Activated T-helper 1 cell treated with anti-CD3 and anti-CD28 coated beads, Interleukin-12 subunit alpha, Interleukin-12 subunit beta, Interleukin-2, Interleukin-4 antibody, amounts not matched to agents 30 ng/mL and 10 ng/mL and 1 ng/mL, durations not matched to agents 14 hours and 24 hours and 36 hours (primary cell): ENCODE measurements at regions of chr22 and their contacts with region 1.

Region 1: GRCh38 chr22:30444632-30445437 is 19.3 kb downstream of the MTFP1 start:
- DNase-seq: peak; percentile 46
- H3K4me3 Mint-ChIP-seq: no peak overlapping the region
- H3K27ac Mint-ChIP-seq: no peak overlapping the region
- H3K4me1 Mint-ChIP-seq: peaks cover 29% of the 10 kb centered on the region
- H3K27me3 Mint-ChIP-seq: peaks cover 27% of the 10 kb centered on the region

Region 2: GRCh38 chr22:30485362-30485988 is 40.6 kb after region 1 on chr22:
- intact Hi-C with region 1: loop called (anchors 1 kb)
- DNase-seq: peak; percentile 70
- H3K4me3 Mint-ChIP-seq: no peak overlapping the region
- H3K27ac Mint-ChIP-seq: no peak overlapping the region
- H3K4me1 Mint-ChIP-seq: no peaks in the 10 kb centered on the region
- H3K27me3 Mint-ChIP-seq: peaks cover 4% of the 10 kb centered on the region

Region 3: GRCh38 chr22:30602049-30602448 is 157.2 kb after region 1 on chr22:
- intact Hi-C with region 1: loop called (anchors 2 kb)
- DNase-seq: peak; percentile 5
- H3K4me3 Mint-ChIP-seq: no peak overlapping the region
- H3K27ac Mint-ChIP-seq: no peak overlapping the region
- H3K4me1 Mint-ChIP-seq: peaks cover 21% of the 10 kb centered on the region
- H3K27me3 Mint-ChIP-seq: no peaks in the 10 kb centered on the region